Breast epithelium (tissue), 4 donors: ENCODE measurements at regions of chr10 and their contacts with region 1.

Region 1: GRCh38 chr10:9038129-9038656 is 983.7 kb downstream of the GATA3 start:
- DNase-seq: peak in 1 of 2 donors; percentile 42
- H3K4me3 ChIP-seq: no peak overlapping the region
- H3K27ac ChIP-seq: peak overlapping the region in 1 of 2 donors; percentile 20
- H3K4me1 ChIP-seq: no peaks in the 10 kb centered on the region
- H3K27me3 ChIP-seq: no peaks in the 10 kb centered on the region
- CTCF ChIP-seq: no peak
- POLR2A ChIP-seq: no peak

Region 2: DNA sequence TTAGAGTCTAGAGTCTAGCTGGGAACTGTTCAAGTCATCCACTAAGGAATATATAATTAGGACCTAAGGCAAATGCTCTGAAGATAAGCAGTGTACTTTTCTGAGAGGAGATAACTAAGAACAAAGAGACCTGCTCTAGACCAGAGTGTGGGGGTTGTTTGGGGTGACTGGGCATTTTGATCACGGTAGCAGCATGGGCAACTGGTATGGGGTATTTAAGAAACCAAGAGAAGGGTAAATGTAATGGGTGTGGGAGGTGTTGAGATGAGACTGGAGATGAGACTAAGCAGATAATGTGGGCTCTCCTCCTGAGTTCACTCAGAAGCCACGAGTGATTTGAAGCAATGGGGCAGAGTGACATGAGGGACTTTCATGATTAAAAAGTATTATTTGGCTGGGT is 99.2 kb after region 1 on chr10:
- intact Hi-C with region 1: loop called (anchors 10 kb)
- DNase-seq: no peak
- H3K4me3 ChIP-seq: no peak overlapping the region
- H3K27ac ChIP-seq: no peak overlapping the region
- H3K4me1 ChIP-seq: no peaks in the 10 kb centered on the region
- H3K27me3 ChIP-seq: no peaks in the 10 kb centered on the region
- CTCF ChIP-seq: no peak
- POLR2A ChIP-seq: no peak